ENCODE measurements at regions of chr2 and their contacts with region 1.

Region 1: DNA sequence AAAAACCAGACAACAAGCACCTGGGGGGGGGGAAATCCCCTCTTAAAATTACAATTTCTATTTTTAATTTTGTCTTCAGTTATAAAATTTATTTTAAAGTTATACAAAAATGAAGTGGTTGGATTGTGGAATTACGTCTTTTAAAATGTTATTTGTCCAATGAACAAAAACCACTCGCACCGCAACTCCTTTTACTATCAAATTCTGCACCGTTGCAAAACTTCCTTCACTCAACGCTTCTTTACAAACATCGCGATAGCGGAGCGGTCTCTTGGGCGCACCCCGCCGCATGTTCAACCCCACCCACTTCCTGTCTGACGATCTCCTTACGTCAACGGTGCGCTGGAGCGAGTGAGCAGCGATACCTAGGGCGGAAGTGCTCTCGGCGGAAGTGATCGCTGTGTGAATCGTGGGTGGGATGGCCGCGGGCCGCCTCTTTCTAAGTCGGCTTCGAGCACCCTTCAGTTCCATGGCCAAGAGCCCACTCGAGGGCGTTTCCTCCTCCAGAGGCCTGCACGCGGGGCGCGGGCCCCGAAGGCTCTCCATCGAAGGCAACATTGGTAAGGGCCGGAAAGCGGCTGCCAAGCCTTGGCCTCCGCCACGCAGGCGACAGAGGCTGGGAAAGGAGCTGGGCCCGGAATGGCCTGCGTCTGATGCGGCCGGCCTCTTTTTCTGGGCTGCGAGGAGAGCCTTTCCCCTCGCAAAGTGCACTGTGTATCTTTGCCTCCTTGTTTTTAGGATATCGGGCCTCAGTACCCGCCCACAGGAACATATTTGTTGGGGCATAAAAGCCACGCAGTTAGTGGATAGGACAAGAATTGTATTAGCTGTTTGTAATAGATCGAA is at the start of gene DGUOK:
- DNase-seq: peak; percentile 99
- ATAC-seq: peak; percentile 99
- H3K4me3 ChIP-seq: peak within 1 kb of the TSS; percentile 76 to 91 (median 82)
- H3K27ac ChIP-seq: peak within 1 kb of the TSS; percentile 78
- H3K4me1 ChIP-seq: peaks cover 44% of the 10 kb centered on the region
- H3K27me3 ChIP-seq: peaks cover 0 to 5% of the 10 kb centered on the region in 2 experiments; a peak in 2 of 5 replicates
- CTCF ChIP-seq: no peak
- EP300 ChIP-seq: peak; percentile 49 to 64; a peak in 2 of 4 replicates
- POLR2A ChIP-seq: peak; percentile 95 to 97
- RAD21 ChIP-seq: peak; percentile 69
- total RNA-seq, gene DGUOK: 105 and 130 TPM in 2 replicates

Region 2: DNA sequence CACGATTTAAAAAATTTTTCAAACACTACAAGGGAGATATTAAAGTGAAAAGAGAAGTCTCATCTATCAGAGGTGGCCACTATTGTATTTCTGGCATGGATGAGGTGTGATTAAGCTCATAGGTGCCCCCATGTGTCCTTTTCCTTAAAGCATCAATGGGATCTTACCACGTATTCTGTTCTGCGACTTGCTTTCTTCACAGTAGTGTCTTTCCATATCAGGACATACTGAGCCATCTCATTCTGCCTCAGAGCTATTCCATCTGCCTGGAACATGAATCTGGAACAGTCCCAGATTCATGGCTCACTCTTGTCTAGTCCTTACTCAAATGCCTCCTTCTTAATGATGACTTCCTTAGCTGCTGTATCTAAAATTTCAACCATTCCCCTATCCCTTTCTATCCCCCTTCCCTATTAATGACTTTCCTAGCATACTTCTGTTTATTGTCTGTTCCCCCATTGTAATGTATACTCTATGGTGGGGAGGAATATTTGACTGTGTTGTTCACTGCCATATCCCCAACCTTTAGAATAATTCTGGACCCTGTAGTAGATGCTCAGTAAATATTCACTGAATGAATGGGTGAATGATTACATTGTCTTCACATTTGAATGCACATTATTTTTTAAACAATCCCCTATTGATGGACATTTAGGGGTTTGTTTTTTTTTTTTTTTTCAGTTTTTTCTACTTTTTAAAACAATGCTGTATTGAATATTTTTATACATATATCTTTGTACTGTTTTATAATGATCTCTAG is 86.9 kb before region 1 on chr2:
- CTCF ChIA-PET with region 1: no interaction called
- POLR2A ChIA-PET with region 1: interaction called, 11 read pairs
- in situ Hi-C with region 1: no loop called
- intact Hi-C with region 1: no loop called
- DNase-seq: no peak
- ATAC-seq: no peak
- H3K4me3 ChIP-seq: no peak overlapping the region
- H3K27ac ChIP-seq: no peak overlapping the region
- H3K4me1 ChIP-seq: peaks cover 26% of the 10 kb centered on the region
- H3K27me3 ChIP-seq: no peaks in the 10 kb centered on the region
- CTCF ChIP-seq: 0 out of 2 replicates have a peak, but pooled peaks have one; percentile 19
- EP300 ChIP-seq: no peak
- POLR2A ChIP-seq: no peak
- RAD21 ChIP-seq: no peak

Region 3: GRCh38 chr2:74458132-74458925 is 531.6 kb after region 1 on chr2 and contains the start of gene WBP1:
- CTCF ChIA-PET with region 1: no interaction called
- POLR2A ChIA-PET with region 1: no interaction called
- in situ Hi-C with region 1: no loop called
- intact Hi-C with region 1: no loop called
- DNase-seq: peak; percentile 100
- ATAC-seq: peak; percentile 92
- H3K4me3 ChIP-seq: peak within 1 kb of the TSS; percentile 76 to 92 (median 88)
- H3K27ac ChIP-seq: peak within 1 kb of the TSS; percentile 89
- H3K4me1 ChIP-seq: peaks cover 41% of the 10 kb centered on the region
- H3K27me3 ChIP-seq: no peaks in the 10 kb centered on the region; a peak in 1 of 5 replicates
- CTCF ChIP-seq: no peak
- EP300 ChIP-seq: no peak; a peak in 1 of 4 replicates
- POLR2A ChIP-seq: peak in 1 of 2 experiments; percentile 62; a peak in 2 of 4 replicates
- RAD21 ChIP-seq: 0 out of 2 replicates have a peak, but pooled peaks have one; percentile 26
- total RNA-seq, gene WBP1: 26.5 and 38.8 TPM in 2 replicates

Measured in HepG2 (cell line).